H1 (cell line): ENCODE measurements at regions of chr16 and their contacts with region 1.

Region 1: GRCh38 chr16:84773312-84773711 is 46.5 kb upstream of the CRISPLD2 start:
- DNase-seq: no peak
- H3K4me3 ChIP-seq: no peak overlapping the region
- H3K27ac ChIP-seq: no peak overlapping the region
- H3K4me1 ChIP-seq: no peaks in the 10 kb centered on the region
- H3K27me3 ChIP-seq: no peaks in the 10 kb centered on the region
- CTCF ChIP-seq: peak in 1 of 3 experiments; percentile 11; a peak in 1 of 4 replicates
- EP300 ChIP-seq: no peak
- POLR2A ChIP-seq: no peak
- RAD21 ChIP-seq: peak in 1 of 2 experiments; percentile 36; a peak in 2 of 4 replicates

Region 2: GRCh38 chr16:84677017-84677803 is 96.1 kb before region 1 on chr16:
- CTCF ChIA-PET with region 1: no interaction called
- POLR2A ChIA-PET with region 1: no interaction called
- DNase-seq: no peak
- H3K4me3 ChIP-seq: no peak overlapping the region
- H3K27ac ChIP-seq: no peak overlapping the region
- H3K4me1 ChIP-seq: peaks cover 0 to 7% (median 3%) of the 10 kb centered on the region in 4 experiments; a peak in 4 of 7 replicates
- H3K27me3 ChIP-seq: no peaks in the 10 kb centered on the region
- CTCF ChIP-seq: no peak
- EP300 ChIP-seq: no peak
- POLR2A ChIP-seq: no peak
- RAD21 ChIP-seq: no peak

Region 3: GRCh38 chr16:84785843-84786581 is 12.7 kb after region 1 on chr16:
- CTCF ChIA-PET with region 1: interaction called, 13 read pairs
- POLR2A ChIA-PET with region 1: interaction called, 6 read pairs
- DNase-seq: no peak
- H3K4me3 ChIP-seq: no peak overlapping the region
- H3K27ac ChIP-seq: no peak overlapping the region
- H3K4me1 ChIP-seq: no peaks in the 10 kb centered on the region
- H3K27me3 ChIP-seq: no peaks in the 10 kb centered on the region
- CTCF ChIP-seq: no peak
- EP300 ChIP-seq: no peak
- POLR2A ChIP-seq: no peak
- RAD21 ChIP-seq: no peak